Breast epithelium (tissue), 4 donors: ENCODE measurements at regions of chr3 and their contacts with region 1.

Region 1: GRCh38 chr3:124895756-124896155 is 8.6 kb upstream of the ITGB5 start:
- DNase-seq: no peak
- H3K4me3 ChIP-seq: no peak overlapping the region
- H3K27ac ChIP-seq: no peak overlapping the region
- H3K4me1 ChIP-seq: no peaks in the 10 kb centered on the region
- H3K27me3 ChIP-seq: no peaks in the 10 kb centered on the region
- CTCF ChIP-seq: no peak
- POLR2A ChIP-seq: no peak

Region 2: DNA sequence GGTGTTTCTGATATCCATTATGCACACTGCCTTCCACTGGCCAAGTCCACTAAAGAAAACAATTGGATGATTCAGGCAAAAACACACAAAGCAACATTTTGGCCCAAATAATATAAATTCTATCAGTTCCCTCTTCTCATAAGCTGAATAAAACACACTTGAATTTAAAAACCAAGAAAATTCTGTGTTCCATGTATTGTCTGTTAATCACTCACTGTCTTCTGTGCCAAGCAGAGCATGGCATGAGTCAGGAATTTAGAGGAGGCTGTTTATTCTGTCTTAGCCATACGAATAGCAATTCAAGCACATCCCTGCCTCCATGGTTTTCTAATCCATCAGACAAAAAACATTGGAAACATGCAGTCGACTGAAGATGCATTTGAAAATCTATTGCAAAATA is 381.1 kb before region 1 on chr3:
- intact Hi-C with region 1: loop called (anchors 5 kb)
- DNase-seq: no peak
- H3K4me3 ChIP-seq: no peak overlapping the region
- H3K27ac ChIP-seq: no peak overlapping the region
- H3K4me1 ChIP-seq: no peaks in the 10 kb centered on the region
- H3K27me3 ChIP-seq: no peaks in the 10 kb centered on the region
- CTCF ChIP-seq: no peak
- POLR2A ChIP-seq: no peak

Region 3: DNA sequence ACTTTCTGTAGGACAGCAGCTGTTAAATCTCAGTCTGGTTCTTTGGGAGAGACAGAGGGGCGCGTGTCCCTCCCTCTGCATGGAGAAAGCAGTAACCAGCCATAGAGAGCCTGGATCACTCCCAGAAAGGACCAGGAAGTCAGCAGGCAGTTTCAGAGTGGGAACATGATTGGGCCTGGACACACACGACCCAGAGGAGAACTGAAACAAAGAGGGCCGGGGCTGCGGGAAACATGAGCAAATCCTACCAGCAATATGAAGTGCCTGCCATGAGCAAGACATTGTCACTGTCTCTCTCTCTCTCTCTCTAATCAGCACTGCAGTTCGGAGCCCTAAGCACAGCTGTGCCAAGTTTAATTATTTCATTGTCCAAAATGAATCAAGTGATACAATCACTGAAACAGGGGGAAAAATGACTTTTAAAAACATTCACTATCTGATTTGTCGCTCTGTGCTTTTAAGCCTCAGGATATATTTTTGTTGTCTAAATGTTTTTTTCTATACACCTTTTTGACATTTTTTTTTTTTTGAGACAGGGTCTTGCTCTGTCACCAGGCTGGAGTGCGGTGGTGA is 21.2 kb after region 1 on chr3:
- intact Hi-C with region 1: no loop called
- DNase-seq: no peak
- H3K4me3 ChIP-seq: no peak overlapping the region
- H3K27ac ChIP-seq: no peak overlapping the region
- H3K4me1 ChIP-seq: no peaks in the 10 kb centered on the region
- H3K27me3 ChIP-seq: no peaks in the 10 kb centered on the region
- CTCF ChIP-seq: no peak
- POLR2A ChIP-seq: no peak

Region 4: DNA sequence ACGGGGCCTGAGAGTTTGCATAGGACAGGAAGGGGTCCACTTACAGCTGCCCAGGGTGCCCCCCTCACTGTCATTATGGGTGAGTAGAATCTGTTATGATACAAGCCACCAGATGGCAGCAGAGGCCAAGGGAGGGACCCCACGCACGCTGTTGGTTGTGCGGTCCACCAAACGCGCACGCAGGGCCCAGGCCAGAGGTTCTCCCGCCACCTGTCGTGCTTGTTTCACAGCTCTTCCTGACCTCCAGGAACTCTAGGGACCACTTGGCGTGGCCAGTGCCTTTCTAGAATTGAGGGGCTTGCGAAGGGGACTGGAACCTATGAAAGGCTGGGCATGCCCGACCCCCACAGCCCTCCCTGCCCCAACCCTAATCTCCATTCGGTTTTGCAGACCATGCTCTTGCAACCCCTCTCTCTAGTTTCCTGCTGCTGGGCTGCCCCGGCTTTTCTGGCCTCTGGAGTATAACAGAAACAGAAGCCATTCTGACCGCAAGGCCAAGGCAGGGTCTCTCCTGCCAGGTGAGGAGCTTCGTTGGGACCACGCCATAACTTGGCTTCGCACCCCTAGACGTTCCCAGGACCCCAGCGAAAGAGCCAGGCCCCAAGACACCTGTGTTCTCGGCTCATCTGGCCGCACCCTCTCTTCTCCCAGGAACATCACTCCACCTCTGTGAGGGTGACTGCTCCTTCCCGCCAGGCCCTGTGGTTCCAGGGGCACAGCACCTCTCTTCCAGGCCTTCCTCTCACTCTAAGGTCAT is 1238.6 kb after region 1 on chr3:
- intact Hi-C with region 1: no loop called
- DNase-seq: peak; percentile 36 to 66
- H3K4me3 ChIP-seq: no peak overlapping the region
- H3K27ac ChIP-seq: no peak overlapping the region
- H3K4me1 ChIP-seq: peaks cover 0 to under 1% of the 10 kb centered on the region in 2 donors
- H3K27me3 ChIP-seq: no peaks in the 10 kb centered on the region
- CTCF ChIP-seq: peak; percentile 65 to 82 (median 82)
- POLR2A ChIP-seq: no peak